Posterior vena cava (tissue), 2 donors: ENCODE measurements at regions of chr14 and their contacts with region 1.

Region 1: GRCh38 chr14:68418174-68419118 is 374.4 kb downstream of the ZFP36L1 start:
- DNase-seq: no peak

Region 2: GRCh38 chr14:68451696-68452373 is 33.4 kb after region 1 on chr14:
- intact Hi-C with region 1: loop called in 1 of 2 experiments (anchors 5 kb)
- DNase-seq: no peak